Aorta (tissue), 5 donors: ENCODE measurements at regions of chr20 and their contacts with region 1.

Region 1: GRCh38 chr20:931401-931800 is 15.3 kb upstream of the ANGPT4 start:
- DNase-seq: no peak
- ATAC-seq: no peak
- H3K4me3 ChIP-seq: no peak overlapping the region
- H3K27ac ChIP-seq: no peak overlapping the region
- H3K4me1 ChIP-seq: no peaks in the 10 kb centered on the region
- H3K27me3 ChIP-seq: no peaks in the 10 kb centered on the region

Region 2: GRCh38 chr20:878511-879307 is 52.7 kb before region 1 on chr20:
- intact Hi-C with region 1: loop called in 1 of 2 experiments (anchors 10 kb)
- DNase-seq: no peak
- ATAC-seq: no peak
- H3K4me3 ChIP-seq: no peak overlapping the region
- H3K27ac ChIP-seq: no peak overlapping the region
- H3K4me1 ChIP-seq: no peaks in the 10 kb centered on the region
- H3K27me3 ChIP-seq: no peaks in the 10 kb centered on the region

Region 3: DNA sequence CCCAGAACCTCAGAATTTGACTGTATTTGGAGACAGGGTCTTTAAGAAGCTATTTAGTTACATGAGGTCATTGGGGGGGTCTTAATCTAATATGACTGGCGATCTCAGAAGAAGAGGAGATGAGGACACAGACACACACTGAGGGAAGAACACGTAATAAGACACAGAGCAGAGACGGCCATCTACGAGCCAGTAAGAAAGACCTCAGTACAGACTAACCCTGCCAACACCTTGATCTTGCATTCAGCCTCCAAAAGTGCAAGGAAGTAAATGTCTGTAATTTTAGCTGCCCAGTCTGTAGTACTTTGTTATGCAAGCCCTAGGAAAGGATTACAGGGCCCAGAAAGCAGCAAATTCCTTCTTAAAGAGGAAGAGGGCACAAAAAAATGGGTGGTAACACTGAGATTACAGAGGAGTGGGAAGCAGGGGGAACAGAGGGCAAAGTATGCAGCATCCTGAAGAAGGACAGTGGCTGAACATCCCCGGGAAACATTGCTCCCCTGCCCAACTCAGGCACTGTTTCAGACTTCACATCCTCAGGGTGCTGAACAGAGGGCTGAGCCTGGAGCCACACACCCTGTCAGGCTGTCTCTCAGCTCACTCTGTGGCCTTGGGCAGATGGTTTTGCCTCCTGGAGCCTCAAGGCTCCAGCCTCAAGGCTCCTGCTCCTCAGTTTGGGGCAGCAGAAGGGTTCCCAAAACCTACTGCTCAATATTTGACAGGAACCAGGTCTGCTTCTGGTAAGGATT is 754.1 kb after region 1 on chr20:
- intact Hi-C with region 1: no loop called
- DNase-seq: no peak
- ATAC-seq: no peak
- H3K4me3 ChIP-seq: no peak overlapping the region
- H3K27ac ChIP-seq: no peak overlapping the region
- H3K4me1 ChIP-seq: no peaks in the 10 kb centered on the region
- H3K27me3 ChIP-seq: no peaks in the 10 kb centered on the region